ENCODE measurements at regions of chr10 and their contacts with region 1.

Region 1: GRCh38 chr10:50275650-50276235 is 24.4 kb upstream of the ASAH2 start:
- DNase-seq: peak; percentile 50 to 88 (median 72)
- ATAC-seq: peak; percentile 91
- H3K4me3 ChIP-seq: no peak overlapping the region
- H3K27ac ChIP-seq: no peak overlapping the region
- H3K4me1 ChIP-seq: peaks cover 13 to 22% of the 10 kb centered on the region in 2 experiments; a peak in 4 of 5 replicates
- H3K27me3 ChIP-seq: no peaks in the 10 kb centered on the region
- CTCF ChIP-seq: peak; percentile 86 to 94 (median 93)
- EP300 ChIP-seq: 0 out of 2 replicates have a peak, but pooled peaks have one; percentile 21
- POLR2A ChIP-seq: no peak
- RAD21 ChIP-seq: peak; percentile 71 to 89

Region 2: GRCh38 chr10:50152792-50153272 is 122.9 kb before region 1 on chr10:
- CTCF ChIA-PET with region 1: no interaction called
- POLR2A ChIA-PET with region 1: no interaction called
- in situ Hi-C with region 1: no loop called
- intact Hi-C with region 1: no loop called
- DNase-seq: peak in 3 of 4 experiments; percentile 13 to 53 (median 19)
- ATAC-seq: peak; percentile 92
- H3K4me3 ChIP-seq: no peak overlapping the region
- H3K27ac ChIP-seq: no peak overlapping the region
- H3K4me1 ChIP-seq: peaks cover 0 to 6% of the 10 kb centered on the region in 2 experiments; a peak in 2 of 5 replicates
- H3K27me3 ChIP-seq: peaks cover 3 to 16% of the 10 kb centered on the region in 2 experiments; a peak in 4 of 5 replicates
- CTCF ChIP-seq: no peak
- EP300 ChIP-seq: no peak
- POLR2A ChIP-seq: no peak
- RAD21 ChIP-seq: peak in 1 of 2 experiments; percentile 41; a peak in 1 of 4 replicates

Region 3: GRCh38 chr10:50224330-50224952 is 51.3 kb before region 1 on chr10:
- CTCF ChIA-PET with region 1: no interaction called
- POLR2A ChIA-PET with region 1: no interaction called
- in situ Hi-C with region 1: no loop called
- intact Hi-C with region 1: loop called (anchors 1 kb)
- DNase-seq: peak in 2 of 4 experiments; percentile 66 to 85
- ATAC-seq: peak; percentile 98
- H3K4me3 ChIP-seq: no peak overlapping the region
- H3K27ac ChIP-seq: no peak overlapping the region
- H3K4me1 ChIP-seq: no peaks in the 10 kb centered on the region; a peak in 1 of 5 replicates
- H3K27me3 ChIP-seq: no peaks in the 10 kb centered on the region
- CTCF ChIP-seq: peak; percentile 84 to 95 (median 86)
- EP300 ChIP-seq: no peak
- POLR2A ChIP-seq: no peak
- RAD21 ChIP-seq: peak; percentile 85 to 93

Region 4: GRCh38 chr10:50242777-50243176 is 33.0 kb before region 1 on chr10:
- CTCF ChIA-PET with region 1: no interaction called
- POLR2A ChIA-PET with region 1: no interaction called
- in situ Hi-C with region 1: no loop called
- intact Hi-C with region 1: loop called (anchors 5 kb)
- DNase-seq: no peak
- ATAC-seq: no peak
- H3K4me3 ChIP-seq: no peak overlapping the region
- H3K27ac ChIP-seq: no peak overlapping the region
- H3K4me1 ChIP-seq: no peaks in the 10 kb centered on the region; a peak in 2 of 5 replicates
- H3K27me3 ChIP-seq: no peaks in the 10 kb centered on the region
- CTCF ChIP-seq: no peak
- EP300 ChIP-seq: no peak
- POLR2A ChIP-seq: no peak
- RAD21 ChIP-seq: no peak

Region 5: GRCh38 chr10:50605269-50606263 is 329.8 kb after region 1 on chr10:
- CTCF ChIA-PET with region 1: no interaction called
- POLR2A ChIA-PET with region 1: no interaction called
- in situ Hi-C with region 1: no loop called
- intact Hi-C with region 1: no loop called
- DNase-seq: peak in 1 of 4 experiments; percentile 69
- ATAC-seq: peak; percentile 68
- H3K4me3 ChIP-seq: no peak overlapping the region
- H3K27ac ChIP-seq: peak overlapping the region; percentile 36; the same call in 1 of the 3 replicates
- H3K4me1 ChIP-seq: peaks cover 14 to 62% of the 10 kb centered on the region in 2 experiments
- H3K27me3 ChIP-seq: no peaks in the 10 kb centered on the region
- CTCF ChIP-seq: no peak
- EP300 ChIP-seq: no peak; the same call in 1 of the 2 replicates
- POLR2A ChIP-seq: no peak
- RAD21 ChIP-seq: no peak